Panc1 (cell line): ENCODE measurements at regions of chr7 and their contacts with region 1.

Region 1: GRCh38 chr7:30817371-30817767 is 46.2 kb downstream of the MINDY4 start:
- DNase-seq: no peak
- ATAC-seq: no peak
- H3K4me3 ChIP-seq: no peak overlapping the region
- H3K27ac ChIP-seq: no peak overlapping the region
- H3K4me1 ChIP-seq: no peaks in the 10 kb centered on the region
- H3K27me3 ChIP-seq: no peaks in the 10 kb centered on the region
- CTCF ChIP-seq: no peak

Region 2: GRCh38 chr7:30914596-30914995 is 97.2 kb after region 1 on chr7:
- CTCF ChIA-PET with region 1: no interaction called
- POLR2A ChIA-PET with region 1: no interaction called
- in situ Hi-C with region 1: no loop called
- intact Hi-C with region 1: no loop called
- DNase-seq: peak; percentile 10
- ATAC-seq: peak; percentile 33; the same call in 1 of the 2 replicates
- H3K4me3 ChIP-seq: no peak overlapping the region
- H3K27ac ChIP-seq: no peak overlapping the region
- H3K4me1 ChIP-seq: no peaks in the 10 kb centered on the region
- H3K27me3 ChIP-seq: no peaks in the 10 kb centered on the region
- CTCF ChIP-seq: no peak

Region 3: DNA sequence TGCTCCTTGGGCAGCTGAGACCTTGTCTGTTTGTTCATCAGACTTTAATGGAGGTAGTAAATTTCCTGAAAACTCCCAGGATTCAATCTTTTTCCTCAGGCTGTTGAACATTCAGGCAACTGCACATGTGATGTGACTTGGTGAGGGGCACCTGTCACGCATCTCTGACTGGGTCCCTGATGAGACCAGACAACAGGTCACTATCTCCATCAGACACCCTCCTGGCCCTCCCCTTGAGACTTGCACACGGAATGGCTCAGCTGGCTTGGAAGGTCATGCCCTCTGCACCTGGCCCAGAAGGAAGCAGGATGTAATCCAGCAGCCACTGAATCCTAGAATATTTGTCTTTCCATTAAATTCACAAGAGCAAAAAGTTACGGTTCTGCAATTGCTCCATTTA is 110.2 kb after region 1 on chr7:
- CTCF ChIA-PET with region 1: no interaction called
- POLR2A ChIA-PET with region 1: interaction called, 13 read pairs
- in situ Hi-C with region 1: no loop called
- intact Hi-C with region 1: no loop called
- DNase-seq: no peak
- ATAC-seq: no peak
- H3K4me3 ChIP-seq: no peak overlapping the region
- H3K27ac ChIP-seq: no peak overlapping the region
- H3K4me1 ChIP-seq: no peaks in the 10 kb centered on the region
- H3K27me3 ChIP-seq: no peaks in the 10 kb centered on the region
- CTCF ChIP-seq: no peak

Region 4: GRCh38 chr7:31251441-31251840 is 434.1 kb after region 1 on chr7:
- CTCF ChIA-PET with region 1: no interaction called
- POLR2A ChIA-PET with region 1: no interaction called
- in situ Hi-C with region 1: no loop called
- intact Hi-C with region 1: no loop called
- DNase-seq: no peak
- ATAC-seq: no peak
- H3K4me3 ChIP-seq: no peak overlapping the region
- H3K27ac ChIP-seq: no peak overlapping the region
- H3K4me1 ChIP-seq: no peaks in the 10 kb centered on the region
- H3K27me3 ChIP-seq: peaks cover 7% of the 10 kb centered on the region
- CTCF ChIP-seq: no peak